ENCODE measurements at regions of chr22 and their contacts with region 1.

Region 1: GRCh38 chr22:22948651-22949571 is 61.3 kb downstream of the IGLL5 start:
- DNase-seq: peak in 1 of 4 experiments; percentile 42
- ATAC-seq: no peak
- H3K4me3 ChIP-seq: no peak overlapping the region
- H3K27ac ChIP-seq: no peak overlapping the region
- H3K4me1 ChIP-seq: peaks cover 0 to 3% of the 10 kb centered on the region in 2 experiments; a peak in 1 of 5 replicates
- H3K27me3 ChIP-seq: peaks cover 22 to 47% of the 10 kb centered on the region in 2 experiments; a peak in 4 of 5 replicates
- CTCF ChIP-seq: no peak
- EP300 ChIP-seq: no peak
- POLR2A ChIP-seq: no peak
- RAD21 ChIP-seq: no peak

Region 2: GRCh38 chr22:22935546-22936157 is 13.3 kb before region 1 on chr22:
- CTCF ChIA-PET with region 1: interaction called, 4 read pairs
- POLR2A ChIA-PET with region 1: interaction called, 74 read pairs
- in situ Hi-C with region 1: no loop called
- intact Hi-C with region 1: no loop called
- DNase-seq: peak; percentile 56 to 72 (median 59)
- ATAC-seq: peak; percentile 77
- H3K4me3 ChIP-seq: no peak overlapping the region
- H3K27ac ChIP-seq: no peak overlapping the region
- H3K4me1 ChIP-seq: no peaks in the 10 kb centered on the region; a peak in 1 of 5 replicates
- H3K27me3 ChIP-seq: peaks cover 6 to 26% of the 10 kb centered on the region in 2 experiments; a peak in 2 of 5 replicates
- CTCF ChIP-seq: no peak
- EP300 ChIP-seq: no peak
- POLR2A ChIP-seq: no peak
- RAD21 ChIP-seq: peak in 1 of 2 experiments; percentile 27; a peak in 2 of 4 replicates

Region 3: DNA sequence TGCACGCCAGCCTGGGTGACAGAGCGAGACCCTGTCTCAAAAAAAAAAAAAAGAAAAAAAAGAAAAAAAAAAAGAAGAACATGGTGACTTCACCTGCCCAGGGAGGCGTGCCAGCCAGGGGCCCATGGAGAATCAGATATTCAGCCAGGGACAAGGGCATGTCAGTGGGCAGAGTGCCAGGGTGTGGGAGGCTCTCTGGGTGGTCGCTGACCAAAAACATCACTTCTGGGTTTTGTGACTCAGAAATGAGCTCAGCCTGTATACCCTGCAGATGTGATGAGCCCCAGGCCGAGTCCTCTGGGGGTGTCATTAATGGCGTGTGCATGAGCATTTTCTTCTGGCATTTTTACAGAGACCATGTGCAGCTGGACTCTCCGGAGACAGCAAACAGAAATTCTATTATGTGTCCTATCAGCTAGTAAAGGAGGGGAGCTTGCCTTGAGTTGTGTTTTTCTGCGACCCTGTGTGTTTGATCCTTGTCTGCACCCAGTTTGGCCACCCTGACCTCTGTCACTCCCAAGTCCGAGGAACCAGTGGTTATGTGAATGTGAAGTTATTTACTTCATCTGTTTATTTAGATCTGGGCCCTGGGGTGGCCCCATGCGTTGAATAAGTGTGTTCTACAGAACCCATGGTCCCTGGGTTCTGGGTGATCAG is 285.0 kb after region 1 on chr22:
- CTCF ChIA-PET with region 1: no interaction called
- POLR2A ChIA-PET with region 1: no interaction called
- in situ Hi-C with region 1: no loop called
- intact Hi-C with region 1: no loop called
- DNase-seq: peak in 3 of 4 experiments; percentile 56 to 64 (median 63)
- ATAC-seq: no peak
- H3K4me3 ChIP-seq: no peak overlapping the region
- H3K27ac ChIP-seq: no peak overlapping the region
- H3K4me1 ChIP-seq: peaks cover 0 to 24% of the 10 kb centered on the region in 2 experiments; a peak in 3 of 5 replicates
- H3K27me3 ChIP-seq: no peaks in the 10 kb centered on the region
- CTCF ChIP-seq: no peak
- EP300 ChIP-seq: no peak
- POLR2A ChIP-seq: no peak
- RAD21 ChIP-seq: no peak

Region 4: DNA sequence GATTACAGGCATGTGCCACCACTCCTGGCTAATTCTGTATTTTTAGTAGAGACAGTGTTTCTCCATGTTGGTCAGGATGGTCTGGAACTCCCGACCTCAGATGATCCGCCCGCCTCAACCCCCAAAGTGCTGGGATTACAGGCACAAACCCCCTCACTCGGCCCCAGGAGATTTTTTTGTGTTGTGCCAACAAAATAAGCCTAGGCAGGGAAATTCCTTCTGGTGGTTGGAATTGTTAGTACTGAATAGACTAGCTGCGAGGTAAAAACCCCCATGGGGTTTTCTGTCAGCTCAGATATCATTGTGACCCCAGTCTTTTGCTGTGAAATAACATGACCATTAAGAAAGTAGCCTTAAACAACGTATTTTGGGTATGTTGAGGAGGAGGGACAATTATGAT is 376.3 kb after region 1 on chr22:
- CTCF ChIA-PET with region 1: no interaction called
- POLR2A ChIA-PET with region 1: no interaction called
- in situ Hi-C with region 1: no loop called
- intact Hi-C with region 1: no loop called
- DNase-seq: no peak
- ATAC-seq: no peak
- H3K4me3 ChIP-seq: no peak overlapping the region
- H3K27ac ChIP-seq: no peak overlapping the region
- H3K4me1 ChIP-seq: no peaks in the 10 kb centered on the region
- H3K27me3 ChIP-seq: no peaks in the 10 kb centered on the region
- CTCF ChIP-seq: no peak
- EP300 ChIP-seq: no peak
- POLR2A ChIP-seq: no peak
- RAD21 ChIP-seq: no peak

Measured in K562 (cell line).